Esophagus muscularis mucosa (tissue), 4 donors: ENCODE measurements at regions of chr12 and their contacts with region 1.

Region 1: DNA sequence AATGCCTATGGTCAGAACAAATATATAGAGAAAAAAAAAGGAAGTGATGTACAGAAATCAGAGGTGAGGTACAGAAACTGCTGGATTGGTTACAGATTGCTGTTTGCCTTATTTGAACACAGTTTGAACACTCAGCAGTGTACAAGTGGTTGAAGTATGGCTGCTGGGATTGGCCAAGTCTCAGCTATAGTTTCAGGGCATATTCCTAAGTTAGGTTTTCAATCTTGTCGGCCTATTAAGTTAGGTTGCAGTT is 146.4 kb downstream of the LLPH start:
- DNase-seq: peak; percentile 21
- H3K4me3 ChIP-seq: no peak overlapping the region
- H3K27ac ChIP-seq: no peak overlapping the region
- H3K4me1 ChIP-seq: no peaks in the 10 kb centered on the region
- H3K27me3 ChIP-seq: no peaks in the 10 kb centered on the region
- CTCF ChIP-seq: no peak
- EP300 ChIP-seq: no peak
- POLR2A ChIP-seq: no peak

Region 2: DNA sequence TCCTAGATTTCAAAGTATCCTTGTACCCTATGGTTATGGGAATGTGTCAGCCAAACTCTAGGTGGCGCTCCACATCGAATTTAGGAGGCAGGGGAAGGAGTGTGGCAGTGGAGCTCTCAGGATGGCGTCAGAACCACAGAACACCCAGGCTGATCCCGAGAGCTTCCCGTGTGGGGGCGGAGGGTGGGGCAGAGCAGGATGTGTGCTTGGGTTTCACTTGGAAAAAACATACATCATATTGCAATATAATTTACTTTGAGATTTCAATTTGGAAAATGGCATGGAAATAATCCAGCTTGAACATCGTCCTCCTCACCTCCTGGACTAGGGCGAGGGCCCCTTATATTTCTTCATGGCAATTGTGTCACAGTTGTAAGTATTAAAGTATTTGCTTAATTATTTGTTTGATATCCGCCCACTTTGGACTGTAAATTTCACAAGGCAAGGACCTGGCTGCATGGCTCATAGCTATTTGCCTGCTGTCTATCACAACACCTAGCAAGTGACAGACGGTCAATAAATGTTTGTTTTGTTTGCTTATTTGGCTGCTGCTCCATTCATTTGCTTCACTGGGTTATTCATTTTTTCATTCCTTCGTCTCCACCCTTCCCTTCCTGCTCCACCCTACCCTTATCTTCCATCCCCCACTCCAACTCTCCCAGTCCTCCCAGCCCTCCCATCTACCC is 381.4 kb before region 1 on chr12:
- intact Hi-C with region 1: loop called (anchors 5 kb)
- DNase-seq: no peak
- H3K4me3 ChIP-seq: peak overlapping the region; percentile 12 to 38 (median 17)
- H3K27ac ChIP-seq: peak overlapping the region; percentile 1 to 44 (median 28)
- H3K4me1 ChIP-seq: peaks cover 12 to 21% (median 21%) of the 10 kb centered on the region in 4 donors
- H3K27me3 ChIP-seq: peaks cover 0 to 11% (median 0%) of the 10 kb centered on the region in 4 donors
- CTCF ChIP-seq: peak; percentile 60 to 70 (median 69)
- EP300 ChIP-seq: no peak
- POLR2A ChIP-seq: no peak

Region 3: GRCh38 chr12:65941388-65941787 is 42.8 kb before region 1 on chr12:
- intact Hi-C with region 1: no loop called
- DNase-seq: no peak
- H3K4me3 ChIP-seq: no peak overlapping the region
- H3K27ac ChIP-seq: no peak overlapping the region
- H3K4me1 ChIP-seq: peaks cover 6 to 10% (median 7%) of the 10 kb centered on the region in 4 donors
- H3K27me3 ChIP-seq: no peaks in the 10 kb centered on the region
- CTCF ChIP-seq: no peak
- EP300 ChIP-seq: no peak
- POLR2A ChIP-seq: no peak